GM10248 (cell line): ENCODE measurements at regions of chr2 and their contacts with region 1.

Region 1: GRCh38 chr2:236512902-236513435 is 56.7 kb upstream of the ACKR3 start:
- DNase-seq: peak; percentile 72
- CTCF ChIP-seq: peak; percentile 72

Region 2: DNA sequence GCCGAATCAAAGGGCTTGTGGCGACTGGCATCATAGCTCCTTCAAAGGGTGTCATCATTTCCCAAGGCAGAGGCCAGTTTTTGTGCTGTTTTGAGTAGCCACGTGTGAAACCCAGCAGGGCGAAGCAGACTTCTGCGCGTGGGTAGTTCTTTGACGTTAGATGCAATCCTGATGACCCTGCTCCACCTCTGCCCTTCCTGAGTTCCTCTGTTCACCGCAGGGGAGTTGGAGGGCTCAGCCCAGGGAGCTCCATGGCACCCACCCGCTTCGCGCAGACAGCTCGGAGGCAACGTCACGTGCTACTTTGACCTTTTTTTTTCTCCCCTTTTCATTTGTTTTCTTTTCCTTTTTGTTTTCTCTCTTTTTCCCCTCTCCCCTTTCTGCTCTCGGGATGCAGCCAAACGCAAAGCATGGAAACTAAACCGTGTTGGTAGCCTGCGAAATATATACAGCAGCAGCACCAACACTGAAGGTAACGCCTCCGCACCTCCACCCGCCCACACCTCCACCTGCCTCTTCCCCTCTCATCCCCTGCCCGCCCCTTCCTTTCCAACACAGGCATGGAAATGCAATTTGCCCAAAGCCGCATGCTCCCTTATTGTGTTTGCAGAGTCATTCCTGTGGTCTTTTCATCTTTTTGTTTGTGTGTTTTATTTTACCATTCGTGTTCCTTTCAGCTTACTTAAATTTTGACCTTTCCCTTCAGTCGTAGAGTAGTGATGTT is 498.4 kb before region 1 on chr2:
- CTCF ChIA-PET with region 1: no interaction called
- POLR2A ChIA-PET with region 1: no interaction called
- DNase-seq: no peak
- CTCF ChIP-seq: no peak

Region 3: DNA sequence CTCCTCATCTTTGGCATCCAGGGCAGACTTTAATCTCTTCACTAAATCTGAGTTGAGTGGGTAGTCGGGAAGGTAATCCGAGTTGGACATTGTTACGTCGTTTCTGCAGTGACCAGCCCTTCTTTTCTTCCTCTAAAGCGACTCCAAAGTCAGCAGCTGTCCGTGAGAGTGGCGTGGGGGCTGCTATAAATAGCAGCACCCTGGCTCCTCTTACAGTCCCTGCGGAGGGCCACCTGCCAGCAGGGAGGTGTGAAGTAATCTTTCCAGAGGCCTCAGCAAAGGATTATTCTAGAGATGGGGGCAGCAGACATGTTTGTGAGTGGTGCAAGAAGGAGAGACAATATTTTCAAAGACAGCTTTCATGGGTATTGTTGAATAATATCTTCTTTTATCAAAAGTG is 248.7 kb before region 1 on chr2 and contains the start of gene ASB18:
- CTCF ChIA-PET with region 1: no interaction called
- POLR2A ChIA-PET with region 1: no interaction called
- DNase-seq: no peak
- CTCF ChIP-seq: no peak

Region 4: DNA sequence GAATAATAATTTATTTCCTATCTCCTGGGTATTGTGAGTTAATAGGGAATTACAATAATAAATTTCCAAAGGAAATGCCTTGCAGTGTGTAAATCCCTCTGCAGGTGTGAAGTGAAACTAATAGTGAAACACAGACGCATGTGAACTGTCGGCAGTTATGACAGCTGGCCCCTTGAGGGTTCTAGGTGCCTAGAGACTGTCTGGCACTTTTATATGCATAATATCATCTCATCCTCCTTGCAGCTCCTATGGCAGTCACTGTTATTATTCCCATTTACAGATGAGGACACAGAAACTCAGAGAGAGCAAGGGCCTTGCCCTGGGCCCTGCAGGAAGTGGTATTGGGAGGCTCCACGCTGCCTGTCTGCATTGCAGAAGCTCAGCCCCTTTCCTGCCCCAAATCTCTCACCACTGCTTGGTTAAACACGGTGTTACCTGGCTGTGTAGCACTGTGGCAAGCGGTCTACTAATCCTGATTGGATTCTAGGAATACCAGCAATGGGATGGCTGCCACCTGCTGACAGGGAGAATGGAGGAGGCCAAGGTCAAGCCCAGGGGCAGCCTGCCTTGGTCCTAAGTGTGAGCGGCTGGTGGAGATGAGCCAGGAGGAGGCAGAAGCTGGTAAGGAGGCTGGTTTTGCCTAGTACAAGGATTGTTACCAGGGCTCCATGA is 23.9 kb after region 1 on chr2:
- CTCF ChIA-PET with region 1: interaction called, 44 read pairs
- POLR2A ChIA-PET with region 1: no interaction called
- DNase-seq: peak; percentile 39
- CTCF ChIP-seq: no peak

Region 5: GRCh38 chr2:236569573-236569973 is 56.6 kb after region 1 on chr2 and contains the start of gene ACKR3:
- CTCF ChIA-PET with region 1: interaction called, 137 read pairs
- POLR2A ChIA-PET with region 1: no interaction called
- DNase-seq: peak; percentile 86
- CTCF ChIP-seq: peak; percentile 71

Region 6: GRCh38 chr2:236597629-236598028 is 84.7 kb after region 1 on chr2:
- CTCF ChIA-PET with region 1: interaction called, 10 read pairs
- POLR2A ChIA-PET with region 1: no interaction called
- DNase-seq: no peak
- CTCF ChIP-seq: no peak

Region 7: DNA sequence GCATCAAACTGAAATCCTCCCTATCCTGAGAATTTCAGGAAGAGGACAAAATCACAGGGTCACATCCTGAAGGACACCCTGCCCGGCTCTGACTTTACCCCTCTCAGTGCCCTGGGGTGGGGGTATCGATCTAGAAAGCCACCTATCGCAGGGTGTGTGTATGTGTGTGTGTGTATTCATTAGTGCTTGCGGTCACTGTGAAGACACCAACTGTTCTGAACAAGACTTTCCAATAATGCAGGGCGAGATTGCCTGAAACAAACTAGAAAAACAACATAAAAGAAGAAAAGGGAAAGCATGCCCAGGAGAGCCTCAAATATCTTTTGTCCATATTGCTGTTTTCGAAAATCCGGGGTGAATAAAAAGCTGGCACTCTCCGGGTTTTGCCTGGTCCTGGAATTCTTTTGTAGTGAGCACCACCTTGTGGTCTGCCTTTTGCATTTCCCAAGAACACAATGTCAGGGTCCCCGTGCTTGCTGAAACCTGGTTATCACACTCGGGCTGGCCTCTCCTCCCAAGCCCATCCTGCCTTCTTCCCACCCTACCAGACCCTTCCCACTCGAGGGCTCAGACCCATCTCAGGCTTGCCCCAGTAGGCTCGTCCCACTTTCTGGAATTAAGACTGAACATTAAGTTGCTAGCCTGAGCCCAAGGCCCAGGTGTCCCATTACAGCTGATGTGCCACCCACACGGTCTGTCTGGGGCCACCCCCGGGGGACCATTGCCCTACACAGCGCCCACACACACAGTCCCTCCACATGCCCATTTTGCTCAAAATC is 547.8 kb after region 1 on chr2:
- CTCF ChIA-PET with region 1: interaction called, 56 read pairs
- POLR2A ChIA-PET with region 1: no interaction called
- DNase-seq: peak; percentile 62
- CTCF ChIP-seq: peak; percentile 69